ENCODE measurements at regions of chr3 and their contacts with region 1.

Region 1: DNA sequence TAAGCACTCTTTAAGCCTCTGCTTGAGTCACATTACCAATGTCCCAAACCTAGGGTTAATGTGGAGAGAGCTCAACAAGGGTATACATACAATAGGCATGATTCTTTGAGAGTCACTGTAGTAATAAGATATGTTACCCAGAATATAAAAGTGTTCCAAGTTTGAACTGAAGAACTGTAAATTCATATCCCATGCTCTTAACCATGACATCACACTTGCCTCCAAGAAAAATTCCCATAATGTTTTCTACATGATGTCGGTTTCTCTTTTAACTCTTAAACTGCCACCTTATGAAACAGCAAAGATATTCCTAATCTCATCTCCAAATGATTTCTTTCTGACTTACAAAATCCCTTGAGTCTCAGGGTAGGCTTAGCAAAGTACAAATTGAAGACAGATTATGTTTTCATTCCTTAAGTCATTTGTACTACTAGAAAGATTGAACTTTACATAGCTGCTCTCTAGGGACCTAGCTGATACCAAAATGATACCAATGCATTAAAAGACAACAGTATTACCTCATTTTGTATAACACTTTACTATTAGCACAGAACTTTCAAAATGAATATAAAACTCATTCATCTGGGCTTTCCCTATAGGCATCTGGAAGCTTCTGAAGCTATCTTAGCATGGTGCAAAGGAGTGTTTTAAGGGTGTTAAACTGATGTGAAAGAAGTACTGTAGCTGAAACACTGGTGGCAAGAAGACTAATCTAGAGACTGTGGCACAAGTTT is 127.1 kb downstream of the KCNMB2 start:
- DNase-seq: no peak
- ATAC-seq: no peak
- H3K4me3 ChIP-seq: no peak overlapping the region
- H3K27ac ChIP-seq: peak overlapping the region in 1 of 10 donors; percentile 20
- H3K4me1 ChIP-seq: peaks cover 0 to 39% (median 19%) of the 10 kb centered on the region in 9 donors
- H3K27me3 ChIP-seq: no peaks in the 10 kb centered on the region
- CTCF ChIP-seq: no peak

Region 2: DNA sequence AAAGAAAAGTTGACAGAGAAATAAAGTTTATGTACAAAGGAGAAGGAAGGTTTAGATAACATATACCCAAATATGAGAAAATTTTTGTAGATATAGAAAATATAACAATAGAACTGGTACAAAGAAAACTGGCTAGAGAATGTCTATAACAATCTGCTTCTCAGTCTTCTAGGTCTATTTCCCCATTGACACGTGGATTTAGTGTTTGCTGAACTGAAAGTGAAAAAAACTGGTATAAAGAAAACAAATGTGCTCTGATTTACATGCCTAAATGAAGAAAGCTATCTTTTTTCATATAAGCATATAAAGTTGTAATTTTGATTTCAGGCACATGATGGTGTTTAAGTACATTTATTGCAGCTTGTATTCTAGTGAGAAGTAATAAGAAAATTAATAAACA is 117.3 kb before region 1 on chr3:
- intact Hi-C with region 1: loop called in 1 of 10 experiments (anchors 10 kb)
- DNase-seq: no peak
- ATAC-seq: no peak
- H3K4me3 ChIP-seq: no peak overlapping the region
- H3K27ac ChIP-seq: no peak overlapping the region
- H3K4me1 ChIP-seq: peaks cover 0 to 19% (median 4%) of the 10 kb centered on the region in 9 donors
- H3K27me3 ChIP-seq: no peaks in the 10 kb centered on the region
- CTCF ChIP-seq: peak in 1 of 9 donors; percentile 15

Region 3: GRCh38 chr3:178634975-178635374 is 28.4 kb before region 1 on chr3:
- intact Hi-C with region 1: no loop called
- DNase-seq: no peak
- ATAC-seq: no peak
- H3K4me3 ChIP-seq: no peak overlapping the region
- H3K27ac ChIP-seq: no peak overlapping the region
- H3K4me1 ChIP-seq: no peaks in the 10 kb centered on the region
- H3K27me3 ChIP-seq: no peaks in the 10 kb centered on the region
- CTCF ChIP-seq: no peak

Region 4: GRCh38 chr3:178690571-178690970 is 27.2 kb after region 1 on chr3:
- intact Hi-C with region 1: no loop called
- DNase-seq: no peak
- ATAC-seq: no peak
- H3K4me3 ChIP-seq: no peak overlapping the region
- H3K27ac ChIP-seq: no peak overlapping the region
- H3K4me1 ChIP-seq: no peaks in the 10 kb centered on the region
- H3K27me3 ChIP-seq: no peaks in the 10 kb centered on the region
- CTCF ChIP-seq: no peak

Measured in heart right ventricle (tissue), 16 donors.